CD8-positive, alpha-beta memory T cell (primary cell): ENCODE measurements at regions of chr3 and their contacts with region 1.

Region 1: DNA sequence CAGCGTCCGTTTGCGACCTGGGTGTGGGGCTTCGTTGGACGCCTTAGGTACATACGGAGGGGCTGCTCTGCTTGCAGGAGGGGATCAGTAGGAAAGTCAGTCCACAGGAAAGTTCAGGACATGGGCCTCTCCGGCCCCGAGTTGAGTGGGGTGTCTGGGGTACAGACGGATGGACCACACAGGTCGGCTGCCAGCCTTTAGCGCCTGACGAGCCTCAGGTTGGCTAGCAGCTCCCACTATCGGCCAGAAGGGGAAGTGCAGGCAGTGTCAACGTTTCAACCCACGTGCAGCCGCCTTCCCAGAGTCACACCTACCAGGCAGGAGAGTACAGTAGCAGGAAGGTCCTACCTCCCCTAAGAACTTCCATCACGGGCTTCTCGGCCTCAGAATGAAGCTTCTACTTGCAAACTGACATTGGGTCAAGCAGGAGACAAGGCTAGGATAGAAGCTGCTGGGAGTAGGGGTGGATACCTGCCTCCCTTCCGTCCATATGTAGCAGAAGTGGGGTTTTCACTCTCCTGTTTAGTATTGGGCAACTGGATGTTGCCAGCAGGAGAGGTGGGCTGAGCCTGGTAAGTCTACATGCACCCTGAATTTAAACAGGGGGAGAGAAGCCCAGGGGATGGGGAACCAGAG is 1.8 kb upstream of the SCN5A start:
- DNase-seq: peak; percentile 42 to 79 (median 54)
- H3K4me3 ChIP-seq: no peak overlapping the region
- H3K4me3 Mint-ChIP-seq: peak overlapping the region in 3 of 7 donors; percentile 34 to 71 (median 59)
- H3K27ac ChIP-seq: no peak overlapping the region
- H3K27ac Mint-ChIP-seq: peak overlapping the region in 1 of 8 donors; percentile 15
- H3K4me1 ChIP-seq: peaks cover 13% of the 10 kb centered on the region
- H3K4me1 Mint-ChIP-seq: peaks cover 8 to 11% (median 8%) of the 10 kb centered on the region in 3 donors
- H3K27me3 ChIP-seq: peaks cover 25% of the 10 kb centered on the region
- H3K27me3 Mint-ChIP-seq: peaks cover 16 to 26% of the 10 kb centered on the region in 2 donors

Region 2: GRCh38 chr3:38496131-38496910 is 155.0 kb before region 1 on chr3 and contains the start of gene EXOG:
- CTCF ChIA-PET with region 1: interaction called, 37 read pairs
- POLR2A ChIA-PET with region 1: no interaction called
- DNase-seq: peak; percentile 85 to 96 (median 94)
- H3K4me3 ChIP-seq: peak within 1 kb of the TSS; percentile 87
- H3K4me3 Mint-ChIP-seq: peak within 1 kb of the TSS; percentile 95 to 99 (median 97)
- H3K27ac ChIP-seq: peak within 1 kb of the TSS; percentile 49
- H3K27ac Mint-ChIP-seq: peak within 1 kb of the TSS; percentile 71 to 98 (median 90)
- H3K4me1 ChIP-seq: peaks cover 10% of the 10 kb centered on the region
- H3K4me1 Mint-ChIP-seq: peaks cover 18 to 33% (median 30%) of the 10 kb centered on the region in 3 donors
- H3K27me3 ChIP-seq: no peaks in the 10 kb centered on the region
- H3K27me3 Mint-ChIP-seq: no peaks in the 10 kb centered on the region
- total RNA-seq, gene EXOG: 17.7 to 19.0 TPM